ENCODE measurements at regions of chr18 and their contacts with region 1.

Region 1: GRCh38 chr18:68779204-68779603 is 18.7 kb upstream of the CCDC102B start:
- DNase-seq: no peak
- ATAC-seq: no peak
- H3K4me3 ChIP-seq: no peak overlapping the region
- H3K27ac ChIP-seq: no peak overlapping the region
- H3K4me1 ChIP-seq: peaks cover 0 to 6% (median 0%) of the 10 kb centered on the region in 12 donors
- H3K27me3 ChIP-seq: no peaks in the 10 kb centered on the region
- CTCF ChIP-seq: no peak
- POLR2A ChIP-seq: no peak

Region 2: DNA sequence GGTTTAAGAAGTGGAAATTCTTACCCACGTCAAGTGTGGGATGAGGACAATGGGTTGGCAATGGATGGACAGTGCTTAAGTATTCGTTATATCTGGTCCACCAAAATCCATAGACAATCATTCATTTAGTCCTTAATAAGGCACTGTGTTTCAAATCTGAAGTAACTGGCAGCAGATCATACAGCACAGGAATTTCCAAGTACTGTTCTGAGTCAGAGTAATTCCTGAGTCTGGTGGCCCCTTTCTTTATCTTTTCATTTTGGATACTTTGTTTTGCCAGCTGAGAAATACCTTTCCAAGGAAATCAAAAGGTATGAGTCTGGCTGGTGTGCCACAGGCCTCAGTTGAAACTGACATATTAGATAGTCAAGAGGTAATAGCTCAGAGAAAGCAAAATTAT is 12.8 kb before region 1 on chr18:
- intact Hi-C with region 1: loop called in 1 of 10 experiments (anchors 1 kb)
- DNase-seq: no peak
- ATAC-seq: no peak
- H3K4me3 ChIP-seq: no peak overlapping the region
- H3K27ac ChIP-seq: no peak overlapping the region
- H3K4me1 ChIP-seq: peaks cover 0 to 2% (median 0%) of the 10 kb centered on the region in 12 donors
- H3K27me3 ChIP-seq: no peaks in the 10 kb centered on the region
- CTCF ChIP-seq: no peak
- POLR2A ChIP-seq: no peak

Region 3: DNA sequence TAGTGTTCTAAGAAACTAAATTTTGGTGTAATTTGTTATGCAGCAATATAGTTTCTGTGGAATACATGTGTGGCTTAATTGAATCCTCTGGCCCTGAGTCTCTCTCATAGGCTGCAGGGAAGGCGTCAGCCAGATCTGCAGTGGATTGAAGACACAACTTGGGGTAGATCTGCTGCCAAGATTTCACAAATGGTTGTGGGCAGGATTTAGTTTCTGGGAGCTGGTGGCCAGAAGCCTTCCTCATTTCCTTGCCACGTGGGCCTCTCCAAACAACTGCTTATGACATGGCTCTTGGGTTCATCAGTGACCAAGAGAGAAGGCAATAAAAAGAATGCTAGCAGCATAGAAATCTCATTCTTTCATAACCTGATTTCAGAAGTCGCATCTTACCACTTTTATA is 46.9 kb after region 1 on chr18:
- intact Hi-C with region 1: loop called in 1 of 10 experiments (anchors 10 kb)
- DNase-seq: peak in 1 of 5 donors; percentile 7
- ATAC-seq: no peak
- H3K4me3 ChIP-seq: no peak overlapping the region
- H3K27ac ChIP-seq: no peak overlapping the region
- H3K4me1 ChIP-seq: peaks cover 0 to 14% (median 0%) of the 10 kb centered on the region in 12 donors
- H3K27me3 ChIP-seq: no peaks in the 10 kb centered on the region
- CTCF ChIP-seq: no peak
- POLR2A ChIP-seq: no peak